Endothelial cell of umbilical vein (primary cell): ENCODE measurements at regions of chr1 and their contacts with region 1.

Region 1: DNA sequence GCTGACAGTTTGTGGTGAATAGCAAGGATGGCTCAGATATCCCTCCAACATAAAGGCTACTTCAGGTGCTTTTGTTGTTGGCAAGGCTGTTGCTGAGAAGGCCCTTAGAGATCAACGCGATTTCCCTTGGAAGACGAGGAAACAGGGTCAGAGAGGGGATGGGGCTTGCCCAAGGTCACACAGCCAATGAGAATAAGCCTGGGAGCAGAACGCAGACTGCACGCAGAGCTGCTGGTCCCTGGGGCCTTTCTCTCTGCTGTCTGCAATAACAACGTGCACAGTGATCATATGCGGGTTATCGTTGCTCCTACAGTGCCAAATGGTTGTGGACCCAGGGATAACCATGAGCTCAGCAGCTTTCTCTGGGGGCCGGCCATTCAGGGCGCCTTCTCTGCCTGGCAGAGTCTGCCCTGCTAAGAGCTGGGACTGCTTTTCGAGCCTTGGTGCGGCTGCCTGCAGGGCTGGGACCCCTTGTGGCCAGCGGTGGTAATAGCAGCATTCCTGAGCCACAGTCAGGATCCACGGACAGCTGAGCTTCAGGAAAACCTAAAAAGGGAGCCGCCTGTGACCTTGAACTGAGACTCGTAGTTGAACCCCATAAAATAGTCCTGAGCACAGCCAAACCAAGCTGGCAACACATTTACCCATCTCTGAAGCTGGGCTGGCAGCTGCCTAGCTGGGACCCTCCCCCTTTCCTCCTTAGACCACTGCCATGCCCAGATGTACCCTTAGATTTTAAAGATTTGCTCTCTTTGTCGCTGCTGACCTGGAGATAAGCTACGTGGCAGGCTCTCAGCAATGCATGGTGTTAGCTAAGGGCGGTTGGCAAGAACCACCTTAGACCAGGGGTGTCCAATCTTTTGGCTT is 39.8 kb downstream of the HTR6 start:
- DNase-seq: peak; percentile 71
- H3K4me3 ChIP-seq: no peak overlapping the region
- H3K27ac ChIP-seq: no peak overlapping the region
- H3K4me1 ChIP-seq: no peaks in the 10 kb centered on the region
- H3K27me3 ChIP-seq: no peaks in the 10 kb centered on the region
- CTCF ChIP-seq: peak; percentile 92 to 96
- POLR2A ChIP-seq: no peak

Region 2: DNA sequence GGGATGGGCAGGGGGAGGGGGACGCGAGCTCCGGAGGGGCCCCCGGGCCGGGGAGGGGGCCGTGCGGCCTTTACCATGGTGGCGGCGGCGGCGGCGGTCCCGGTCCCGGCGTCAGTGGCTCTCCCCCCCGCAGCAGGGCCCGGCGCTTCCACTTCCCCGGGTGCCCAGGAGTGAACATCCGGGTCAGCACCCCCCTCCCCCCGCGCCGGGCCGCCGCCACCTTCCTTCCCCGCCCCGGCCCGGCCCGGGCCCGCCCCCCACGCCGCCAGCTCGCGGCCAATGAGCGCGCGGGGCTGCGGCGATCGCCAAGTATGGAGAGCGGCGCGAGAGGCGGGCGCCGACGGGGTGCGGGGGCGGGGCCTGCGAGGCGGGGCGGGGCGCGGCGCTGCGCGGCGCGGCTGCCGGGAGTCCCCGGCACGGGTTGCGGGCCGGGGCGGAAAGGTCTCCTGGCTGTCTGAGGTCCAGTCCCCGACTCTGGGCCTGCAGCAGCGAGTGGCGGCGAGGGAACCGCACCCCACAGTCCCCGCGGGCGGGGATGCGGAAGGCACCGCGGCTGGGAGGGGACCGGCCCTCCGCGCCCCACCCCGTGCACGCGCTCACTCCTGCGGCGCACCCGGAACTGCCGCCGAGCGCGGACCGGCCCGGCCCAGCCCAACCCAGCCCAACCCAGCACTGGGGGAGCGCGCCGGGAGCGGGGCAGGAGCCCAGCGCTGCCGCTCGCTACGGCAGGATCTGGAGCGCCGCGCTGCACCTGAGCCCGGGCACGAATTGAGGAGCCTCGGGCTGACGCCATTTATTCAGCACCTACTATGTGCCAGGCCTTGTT is 218.9 kb before region 1 on chr1 and contains the start of gene CAPZB:
- CTCF ChIA-PET with region 1: no interaction called
- POLR2A ChIA-PET with region 1: no interaction called
- dilution Hi-C with region 1: no loop called
- intact Hi-C with region 1: no loop called
- DNase-seq: peak; percentile 79
- H3K4me3 ChIP-seq: peak within 1 kb of the TSS; percentile 69 to 98 (median 72)
- H3K27ac ChIP-seq: peak within 1 kb of the TSS; percentile 91
- H3K4me1 ChIP-seq: peaks cover 35% of the 10 kb centered on the region
- H3K27me3 ChIP-seq: no peaks in the 10 kb centered on the region
- CTCF ChIP-seq: no peak
- POLR2A ChIP-seq: peak; percentile 62
- total RNA-seq, gene CAPZB: 339 and 347 TPM in 2 replicates

Region 3: GRCh38 chr1:19661721-19662228 is 42.7 kb before region 1 on chr1:
- CTCF ChIA-PET with region 1: interaction called, 200 read pairs
- POLR2A ChIA-PET with region 1: no interaction called
- dilution Hi-C with region 1: no loop called
- intact Hi-C with region 1: loop called (anchors 1 kb)
- DNase-seq: peak; percentile 57
- H3K4me3 ChIP-seq: no peak overlapping the region
- H3K27ac ChIP-seq: no peak overlapping the region
- H3K4me1 ChIP-seq: peaks cover 3% of the 10 kb centered on the region
- H3K27me3 ChIP-seq: peaks cover 26 to 38% of the 10 kb centered on the region in 2 experiments
- CTCF ChIP-seq: peak; percentile 36 to 56
- POLR2A ChIP-seq: no peak

Region 4: GRCh38 chr1:19668893-19669292 is 35.6 kb before region 1 on chr1:
- CTCF ChIA-PET with region 1: interaction called, 200 read pairs
- POLR2A ChIA-PET with region 1: no interaction called
- dilution Hi-C with region 1: no loop called
- intact Hi-C with region 1: no loop called
- DNase-seq: no peak
- H3K4me3 ChIP-seq: no peak overlapping the region
- H3K27ac ChIP-seq: no peak overlapping the region
- H3K4me1 ChIP-seq: no peaks in the 10 kb centered on the region
- H3K27me3 ChIP-seq: peaks cover 28 to 35% of the 10 kb centered on the region in 2 experiments
- CTCF ChIP-seq: no peak
- POLR2A ChIP-seq: no peak

Region 5: GRCh38 chr1:19682257-19682656 is 22.2 kb before region 1 on chr1:
- CTCF ChIA-PET with region 1: interaction called, 53 read pairs
- POLR2A ChIA-PET with region 1: no interaction called
- dilution Hi-C with region 1: no loop called
- intact Hi-C with region 1: no loop called
- DNase-seq: no peak
- H3K4me3 ChIP-seq: no peak overlapping the region
- H3K27ac ChIP-seq: no peak overlapping the region
- H3K4me1 ChIP-seq: no peaks in the 10 kb centered on the region
- H3K27me3 ChIP-seq: no peaks in the 10 kb centered on the region
- CTCF ChIP-seq: no peak
- POLR2A ChIP-seq: no peak

Region 6: GRCh38 chr1:19688041-19688842 is 16.2 kb before region 1 on chr1:
- CTCF ChIA-PET with region 1: interaction called, 53 read pairs
- POLR2A ChIA-PET with region 1: no interaction called
- dilution Hi-C with region 1: no loop called
- intact Hi-C with region 1: no loop called
- DNase-seq: no peak
- H3K4me3 ChIP-seq: no peak overlapping the region
- H3K27ac ChIP-seq: no peak overlapping the region
- H3K4me1 ChIP-seq: no peaks in the 10 kb centered on the region
- H3K27me3 ChIP-seq: no peaks in the 10 kb centered on the region
- CTCF ChIP-seq: no peak
- POLR2A ChIP-seq: no peak

Region 7: GRCh38 chr1:19715334-19716203 is 11.1 kb after region 1 on chr1:
- CTCF ChIA-PET with region 1: interaction called, 36 read pairs
- POLR2A ChIA-PET with region 1: no interaction called
- dilution Hi-C with region 1: no loop called
- intact Hi-C with region 1: no loop called
- DNase-seq: peak; percentile 97
- H3K4me3 ChIP-seq: no peak overlapping the region
- H3K27ac ChIP-seq: no peak overlapping the region
- H3K4me1 ChIP-seq: no peaks in the 10 kb centered on the region
- H3K27me3 ChIP-seq: no peaks in the 10 kb centered on the region
- CTCF ChIP-seq: peak; percentile 96 to 98
- POLR2A ChIP-seq: no peak